Posterior vena cava (tissue), 2 donors: ENCODE measurements at regions of chr11 and their contacts with region 1.

Region 1: DNA sequence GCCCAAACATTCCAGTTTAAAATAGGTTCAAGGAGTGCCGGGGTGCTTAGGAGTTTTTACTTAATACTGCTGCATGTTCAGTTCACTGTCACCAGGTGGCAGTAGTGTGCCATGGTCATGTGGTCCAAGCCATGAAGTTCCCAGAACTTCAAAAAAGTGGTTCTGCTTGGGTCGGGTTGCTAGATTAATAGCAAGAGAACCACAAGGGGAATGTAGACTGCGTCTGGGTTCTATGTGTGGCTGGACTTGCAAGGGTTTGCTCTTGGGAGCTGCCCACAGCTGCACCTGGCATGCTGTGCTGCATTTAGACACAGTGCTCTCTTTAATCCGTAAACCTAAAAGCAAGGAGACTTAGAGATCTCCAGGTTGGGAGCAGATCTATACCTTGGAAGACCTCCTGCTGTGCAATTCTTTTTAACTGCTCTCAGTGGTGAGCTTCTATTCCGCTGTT is 6.5 kb upstream of the SPON1 start:
- DNase-seq: no peak

Region 2: DNA sequence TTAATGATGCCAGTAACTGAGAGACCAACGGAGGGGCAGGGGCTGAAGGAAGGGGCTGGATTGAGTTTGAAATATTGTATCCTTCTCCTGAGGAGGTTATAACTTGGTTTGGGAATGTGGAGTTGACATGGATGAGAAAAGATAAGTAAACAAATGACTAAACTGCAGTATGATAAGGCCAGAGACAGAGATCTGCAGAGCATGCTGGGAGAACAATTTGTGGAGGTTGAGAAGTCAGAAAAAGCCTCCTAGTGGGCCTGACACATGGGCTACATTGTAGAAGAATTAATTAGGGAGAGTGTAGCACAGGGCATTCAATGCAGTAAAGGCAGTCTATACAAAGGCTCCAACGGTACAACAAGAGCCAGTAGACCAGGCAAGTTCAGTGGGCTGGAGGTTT is 62.4 kb after region 1 on chr11:
- intact Hi-C with region 1: loop called in 1 of 2 experiments (anchors 2 kb)
- DNase-seq: no peak

Region 3: DNA sequence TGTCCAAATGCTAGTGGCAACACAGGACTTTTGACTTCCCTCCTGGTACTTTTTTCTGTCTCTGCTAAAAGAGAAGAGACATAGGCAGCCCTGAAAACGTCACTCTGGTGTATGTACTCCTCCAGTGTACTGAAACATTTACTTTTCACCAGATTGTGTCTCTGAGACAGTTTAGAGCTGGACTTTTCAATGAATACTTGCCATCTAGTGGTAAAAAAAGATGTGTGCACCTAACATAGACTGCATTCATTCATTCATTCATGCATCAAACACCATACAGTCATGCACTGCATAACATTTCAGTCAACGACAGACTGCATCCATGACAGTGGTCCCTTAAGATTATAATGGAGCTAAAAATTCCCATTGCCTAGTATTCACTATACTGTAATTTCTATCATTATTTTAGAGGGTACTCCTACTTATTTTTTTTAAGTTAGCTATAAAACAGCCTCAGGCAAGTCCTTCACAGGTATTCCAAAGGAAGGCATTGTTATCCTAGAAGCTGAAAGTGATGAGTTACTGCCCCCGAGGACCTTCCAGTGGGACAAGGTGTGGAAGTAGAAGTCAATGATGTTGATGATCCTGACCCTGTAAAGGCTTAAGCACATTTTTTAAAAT is 192.8 kb after region 1 on chr11:
- intact Hi-C with region 1: loop called (anchors 5 to 10 kb)
- DNase-seq: no peak

Region 4: DNA sequence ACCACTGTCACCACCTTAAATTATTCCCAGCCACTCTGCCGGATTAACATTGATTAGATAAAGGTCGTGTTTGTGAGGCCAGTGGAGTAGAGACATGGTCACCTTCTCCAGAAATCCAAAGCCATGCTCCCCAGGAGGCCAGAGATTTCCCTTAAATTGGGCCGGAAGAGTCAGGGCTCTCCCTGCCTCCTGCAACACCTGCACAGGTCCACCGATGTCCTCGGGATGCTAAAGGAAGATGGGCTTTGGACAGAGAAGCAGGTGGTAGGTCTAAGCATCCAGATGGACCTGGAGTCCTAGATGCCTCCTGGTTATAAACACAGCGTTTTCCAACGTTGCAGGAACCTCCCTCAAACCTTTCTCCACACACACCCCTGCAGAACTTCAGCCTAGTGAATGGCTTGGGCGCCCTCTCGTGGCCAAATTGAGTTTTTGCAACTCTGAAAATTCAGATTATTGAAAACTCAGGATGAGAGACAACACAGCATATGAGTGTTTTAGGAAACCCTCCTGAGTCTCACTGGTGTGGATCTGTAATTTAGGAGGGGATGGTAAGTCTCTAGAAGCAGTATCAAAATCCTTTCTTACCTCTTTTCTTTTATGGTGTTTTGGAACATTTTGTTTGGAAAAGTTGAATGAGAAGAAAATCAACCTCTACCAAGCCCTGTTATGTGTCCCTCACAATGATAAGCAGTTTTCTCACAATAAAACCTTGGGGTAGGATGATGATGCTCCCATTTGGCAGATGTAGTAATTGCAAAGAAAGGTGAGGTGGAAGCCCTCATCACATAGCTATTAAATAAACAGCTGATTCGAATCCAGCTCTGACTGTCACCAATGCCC is 293.3 kb after region 1 on chr11:
- intact Hi-C with region 1: loop called (anchors 2 to 10 kb)
- DNase-seq: peak; percentile 88